ENCODE measurements at regions of chr1 and their contacts with region 1.

Region 1: GRCh38 chr1:202599677-202600431 is 110.4 kb downstream of the SYT2 start:
- DNase-seq: peak; percentile 72
- ATAC-seq: peak; percentile 96
- H3K4me3 Mint-ChIP-seq: no peak overlapping the region
- H3K27ac Mint-ChIP-seq: no peak overlapping the region
- H3K4me1 Mint-ChIP-seq: no peaks in the 10 kb centered on the region
- H3K27me3 Mint-ChIP-seq: no peaks in the 10 kb centered on the region
- CTCF ChIP-seq: peak; percentile 52; the same call in 1 of the 2 replicates

Region 2: GRCh38 chr1:202501281-202501680 is 98.6 kb before region 1 on chr1:
- CTCF ChIA-PET with region 1: interaction called, 16 read pairs
- POLR2A ChIA-PET with region 1: no interaction called
- DNase-seq: no peak
- ATAC-seq: peak; percentile 75
- H3K4me3 Mint-ChIP-seq: no peak overlapping the region
- H3K27ac Mint-ChIP-seq: 0 out of 2 replicates have a peak overlapping the region, but pooled peaks have one; percentile 4
- H3K4me1 Mint-ChIP-seq: peaks cover 7% of the 10 kb centered on the region
- H3K27me3 Mint-ChIP-seq: no peaks in the 10 kb centered on the region
- CTCF ChIP-seq: no peak

Region 3: DNA sequence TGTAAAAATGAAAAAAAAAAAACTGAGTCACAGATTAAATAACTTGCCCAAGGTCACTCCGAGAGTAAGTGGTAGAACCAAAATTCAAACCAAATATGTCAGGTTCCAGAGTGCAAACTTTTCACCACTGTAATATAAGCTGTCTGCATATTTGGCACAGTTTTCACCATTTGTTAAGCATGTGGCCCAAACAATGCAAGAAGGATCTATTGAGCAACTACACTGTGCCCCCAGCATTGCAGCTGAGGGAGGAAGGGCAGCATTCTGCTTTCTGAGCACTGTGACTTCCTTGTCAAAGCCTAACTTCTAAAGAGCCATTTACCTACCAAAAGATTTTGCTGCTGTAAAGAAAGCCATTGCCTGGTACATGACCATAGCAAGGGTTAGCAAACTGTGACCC is 23.0 kb before region 1 on chr1:
- CTCF ChIA-PET with region 1: interaction called, 25 read pairs
- POLR2A ChIA-PET with region 1: no interaction called
- DNase-seq: no peak
- ATAC-seq: no peak
- H3K4me3 Mint-ChIP-seq: no peak overlapping the region
- H3K27ac Mint-ChIP-seq: peak overlapping the region; percentile 37
- H3K4me1 Mint-ChIP-seq: peaks cover 40% of the 10 kb centered on the region
- H3K27me3 Mint-ChIP-seq: no peaks in the 10 kb centered on the region
- CTCF ChIP-seq: no peak

Region 4: GRCh38 chr1:202656951-202657646 is 57.2 kb after region 1 on chr1:
- CTCF ChIA-PET with region 1: interaction called, 12 read pairs
- POLR2A ChIA-PET with region 1: no interaction called
- DNase-seq: peak; percentile 85
- ATAC-seq: peak; percentile 90
- H3K4me3 Mint-ChIP-seq: no peak overlapping the region
- H3K27ac Mint-ChIP-seq: no peak overlapping the region
- H3K4me1 Mint-ChIP-seq: peaks cover 9% of the 10 kb centered on the region; the same call in 1 of the 2 replicates
- H3K27me3 Mint-ChIP-seq: no peaks in the 10 kb centered on the region
- CTCF ChIP-seq: no peak

Region 5: GRCh38 chr1:202716654-202717053 is 116.8 kb after region 1 on chr1:
- CTCF ChIA-PET with region 1: interaction called, 15 read pairs
- POLR2A ChIA-PET with region 1: no interaction called
- DNase-seq: no peak
- ATAC-seq: no peak
- H3K4me3 Mint-ChIP-seq: no peak overlapping the region
- H3K27ac Mint-ChIP-seq: no peak overlapping the region
- H3K4me1 Mint-ChIP-seq: peaks cover 27% of the 10 kb centered on the region
- H3K27me3 Mint-ChIP-seq: peaks cover 3% of the 10 kb centered on the region; the same call in 1 of the 2 replicates
- CTCF ChIP-seq: no peak

Measured in WTC11 (cell line).